ENCODE measurements at regions of chr11 and their contacts with region 1.

Region 1: DNA sequence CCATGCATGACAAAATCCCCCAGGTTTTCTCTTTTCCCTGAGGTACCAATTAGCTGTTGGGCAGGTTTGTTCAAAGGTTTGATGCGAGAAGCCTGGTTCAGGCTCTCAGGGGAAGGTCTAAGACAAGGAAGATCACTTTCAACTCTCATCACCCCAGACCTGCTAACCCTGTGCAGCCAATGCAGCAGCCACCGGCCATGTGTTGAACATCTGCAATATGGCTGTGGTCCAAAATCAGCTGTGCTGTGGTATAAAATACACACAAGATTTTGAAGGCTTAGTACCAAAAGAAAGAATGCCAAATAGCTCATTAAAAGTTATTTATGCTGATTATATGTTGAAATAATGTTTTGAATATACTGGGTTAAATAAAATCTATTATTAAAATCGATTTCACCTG is 58.5 kb downstream of the SMCO4 start:
- DNase-seq: no peak
- ATAC-seq: no peak
- H3K4me3 ChIP-seq: no peak overlapping the region
- H3K27ac ChIP-seq: no peak overlapping the region
- H3K4me1 ChIP-seq: no peaks in the 10 kb centered on the region
- H3K27me3 ChIP-seq: no peaks in the 10 kb centered on the region
- CTCF ChIP-seq: no peak
- POLR2A ChIP-seq: no peak
- RAD21 ChIP-seq: no peak

Region 2: DNA sequence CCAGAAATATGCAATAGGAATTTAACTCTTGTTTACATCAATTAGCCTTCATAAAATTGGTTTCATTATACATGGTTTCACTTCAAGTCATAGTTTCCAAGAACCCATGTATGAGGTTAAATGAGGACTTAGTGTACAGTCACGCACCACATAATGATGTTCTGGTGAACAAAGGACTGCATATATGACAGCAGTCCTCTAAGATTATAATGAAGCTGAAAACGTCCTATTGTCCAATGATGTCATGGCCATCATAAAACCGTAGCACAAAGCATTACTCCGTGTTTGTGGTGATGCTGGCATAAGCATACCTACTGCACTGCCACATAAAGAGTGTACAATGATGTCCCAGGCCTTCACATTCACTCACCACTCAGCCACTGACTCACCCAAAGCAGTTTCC is 27.4 kb after region 1 on chr11:
- CTCF ChIA-PET with region 1: no interaction called
- POLR2A ChIA-PET with region 1: no interaction called
- RAD21 ChIA-PET with region 1: no interaction called
- intact Hi-C with region 1: loop called (anchors 1 kb)
- DNase-seq: no peak
- ATAC-seq: no peak
- H3K4me3 ChIP-seq: no peak overlapping the region
- H3K27ac ChIP-seq: no peak overlapping the region
- H3K4me1 ChIP-seq: no peaks in the 10 kb centered on the region
- H3K27me3 ChIP-seq: no peaks in the 10 kb centered on the region
- CTCF ChIP-seq: no peak
- POLR2A ChIP-seq: no peak
- RAD21 ChIP-seq: no peak

Measured in HCT116 (cell line).